ENCODE measurements at regions of chr11 and their contacts with region 1.

Region 1: DNA sequence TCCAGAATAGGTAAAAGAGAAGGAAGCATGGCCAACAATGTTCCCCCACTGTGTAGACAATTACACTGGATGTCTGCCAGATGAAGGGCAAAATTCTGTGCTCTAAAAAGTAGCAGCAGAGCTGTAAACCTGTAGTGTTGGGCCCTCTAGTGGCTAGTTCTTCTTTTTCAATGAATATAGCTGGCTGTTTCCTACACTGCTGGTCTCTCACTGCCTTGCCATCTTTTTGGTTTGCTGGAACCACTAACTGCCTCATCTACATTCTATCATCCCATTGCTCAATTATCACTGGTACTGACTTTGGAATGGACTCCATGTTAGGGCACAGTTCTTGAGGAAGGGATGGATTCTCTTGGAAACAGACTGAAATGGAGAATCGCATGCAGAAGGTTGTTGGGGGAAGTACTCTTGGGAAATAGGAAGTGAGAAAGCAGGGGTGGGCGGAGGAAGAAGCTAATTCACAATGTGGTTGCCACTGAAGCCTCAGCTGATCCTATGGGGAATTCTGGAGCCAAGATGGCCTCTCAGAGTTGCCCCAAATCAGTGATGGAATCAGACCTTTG is 17.9 kb downstream of the KCNE3 start:
- DNase-seq: peak; percentile 37
- H3K4me3 Mint-ChIP-seq: no peak overlapping the region
- H3K27ac Mint-ChIP-seq: no peak overlapping the region
- H3K4me1 Mint-ChIP-seq: peaks cover 2% of the 10 kb centered on the region
- H3K27me3 Mint-ChIP-seq: peaks cover 25% of the 10 kb centered on the region

Region 2: GRCh38 chr11:74255741-74256369 is 193.6 kb before region 1 on chr11:
- CTCF ChIA-PET with region 1: interaction called, 40 read pairs
- DNase-seq: peak; percentile 66
- H3K4me3 Mint-ChIP-seq: no peak overlapping the region
- H3K27ac Mint-ChIP-seq: no peak overlapping the region
- H3K4me1 Mint-ChIP-seq: no peaks in the 10 kb centered on the region
- H3K27me3 Mint-ChIP-seq: no peaks in the 10 kb centered on the region

Region 3: DNA sequence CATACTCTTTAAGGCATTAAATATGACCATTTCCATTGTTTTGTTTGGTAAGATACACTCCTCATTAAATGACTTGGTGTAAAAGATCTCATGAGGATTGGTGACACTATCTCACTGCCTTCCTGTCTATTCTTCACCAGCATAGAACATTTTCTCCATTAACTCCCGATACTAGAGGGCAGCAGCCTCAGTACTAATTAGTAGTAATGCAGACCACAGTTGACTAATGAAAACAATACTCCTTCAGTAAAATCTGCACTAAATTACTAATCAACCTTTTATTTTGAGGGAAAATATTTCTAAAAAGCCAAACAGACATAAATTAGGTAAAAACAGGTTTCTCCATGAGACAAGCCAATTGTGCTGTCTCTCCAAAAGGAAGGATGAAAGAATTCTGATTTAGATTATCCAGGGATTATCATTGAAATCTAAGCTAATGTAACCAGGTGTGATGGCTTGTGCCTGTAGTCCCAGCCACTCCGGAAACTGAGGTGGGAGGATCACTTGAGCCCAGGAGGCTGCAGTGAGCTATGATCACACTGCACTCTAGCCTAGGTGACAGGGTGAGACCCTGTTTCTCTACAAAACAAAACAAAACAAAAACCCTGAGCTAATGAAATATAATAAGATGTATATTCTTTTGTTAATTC is 60.6 kb before region 1 on chr11:
- CTCF ChIA-PET with region 1: interaction called, 54 read pairs
- DNase-seq: peak; percentile 75
- H3K4me3 Mint-ChIP-seq: no peak overlapping the region
- H3K27ac Mint-ChIP-seq: no peak overlapping the region
- H3K4me1 Mint-ChIP-seq: peaks cover 16% of the 10 kb centered on the region
- H3K27me3 Mint-ChIP-seq: no peaks in the 10 kb centered on the region

Region 4: GRCh38 chr11:74462009-74462408 is 12.6 kb after region 1 on chr11:
- CTCF ChIA-PET with region 1: interaction called, 22 read pairs
- DNase-seq: no peak
- H3K4me3 Mint-ChIP-seq: no peak overlapping the region
- H3K27ac Mint-ChIP-seq: no peak overlapping the region
- H3K4me1 Mint-ChIP-seq: no peaks in the 10 kb centered on the region
- H3K27me3 Mint-ChIP-seq: peaks cover 39% of the 10 kb centered on the region

Region 5: GRCh38 chr11:74478877-74479731 is 29.7 kb after region 1 on chr11:
- CTCF ChIA-PET with region 1: interaction called, 17 read pairs
- DNase-seq: no peak
- H3K4me3 Mint-ChIP-seq: no peak overlapping the region
- H3K27ac Mint-ChIP-seq: no peak overlapping the region
- H3K4me1 Mint-ChIP-seq: no peaks in the 10 kb centered on the region
- H3K27me3 Mint-ChIP-seq: no peaks in the 10 kb centered on the region

Region 6: GRCh38 chr11:74492974-74493790 is 43.7 kb after region 1 on chr11 and contains the start of gene LIPT2:
- CTCF ChIA-PET with region 1: interaction called, 12 read pairs
- DNase-seq: peak; percentile 99
- H3K4me3 Mint-ChIP-seq: peak within 1 kb of the TSS; percentile 78
- H3K27ac Mint-ChIP-seq: peak within 1 kb of the TSS; percentile 93
- H3K4me1 Mint-ChIP-seq: peaks cover 23% of the 10 kb centered on the region
- H3K27me3 Mint-ChIP-seq: no peaks in the 10 kb centered on the region

Region 7: GRCh38 chr11:74570266-74571061 is 121.0 kb after region 1 on chr11:
- CTCF ChIA-PET with region 1: interaction called, 97 read pairs
- DNase-seq: peak; percentile 44
- H3K4me3 Mint-ChIP-seq: no peak overlapping the region
- H3K27ac Mint-ChIP-seq: no peak overlapping the region
- H3K4me1 Mint-ChIP-seq: no peaks in the 10 kb centered on the region
- H3K27me3 Mint-ChIP-seq: peaks cover 5% of the 10 kb centered on the region